ENCODE measurements at regions of chr11 and their contacts with region 1.

Region 1: DNA sequence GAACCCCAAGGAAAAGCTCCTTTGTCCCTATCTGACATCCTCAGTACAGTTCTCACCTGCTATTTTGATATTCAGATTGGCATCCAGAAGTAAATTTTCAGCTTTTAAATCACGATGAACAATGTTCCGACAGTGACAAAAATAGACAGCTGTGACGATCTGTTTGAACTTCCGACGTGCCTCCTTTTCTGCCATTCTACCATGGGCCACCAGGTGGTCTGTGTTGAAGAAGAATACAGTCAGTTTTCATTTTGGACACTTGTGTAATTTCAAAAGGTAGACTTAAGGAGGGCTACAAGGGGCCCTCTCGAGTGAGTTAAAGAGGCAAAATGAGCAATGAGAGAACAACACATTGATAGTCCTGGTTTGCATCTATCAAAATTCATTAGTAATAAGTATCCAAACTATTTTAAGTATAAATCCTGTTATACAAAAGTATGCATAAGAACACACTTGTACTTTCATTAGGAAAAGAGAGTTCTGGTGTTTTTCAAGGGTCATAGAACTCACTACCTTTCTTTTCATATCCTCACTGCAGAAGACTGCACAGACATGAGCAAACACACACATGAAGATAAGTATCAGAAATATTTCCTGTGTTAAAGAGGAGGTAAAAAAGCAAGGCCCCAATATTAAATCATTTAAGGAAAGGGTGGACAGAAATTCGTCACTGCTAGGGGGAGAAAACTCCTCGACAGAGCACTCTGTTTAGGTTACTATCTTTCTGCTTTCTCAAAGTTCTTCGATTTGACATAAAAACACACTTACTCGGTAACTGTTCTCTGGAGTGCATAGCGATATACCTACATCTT is 89.9 kb upstream of the APOA1 start:
- DNase-seq: peak in 7 of 9 donors; percentile 49 to 75 (median 65)
- ATAC-seq: peak; percentile 52
- H3K4me3 ChIP-seq: peak overlapping the region; percentile 18
- H3K4me3 Mint-ChIP-seq: peak overlapping the region; percentile 56 to 85 (median 72)
- H3K27ac ChIP-seq: peak overlapping the region; percentile 81
- H3K27ac Mint-ChIP-seq: peak overlapping the region; percentile 64 to 98 (median 94)
- H3K4me1 ChIP-seq: peaks cover 76 to 80% of the 10 kb centered on the region in 2 donors
- H3K4me1 Mint-ChIP-seq: peaks cover 53 to 90% (median 83%) of the 10 kb centered on the region in 7 donors
- H3K27me3 ChIP-seq: no peaks in the 10 kb centered on the region
- H3K27me3 Mint-ChIP-seq: no peaks in the 10 kb centered on the region

Region 2: GRCh38 chr11:116772443-116773202 is 154.7 kb before region 1 on chr11 and contains the start of gene BUD13:
- CTCF ChIA-PET with region 1: no interaction called
- POLR2A ChIA-PET with region 1: interaction called, 3 read pairs
- intact Hi-C with region 1: loop called in 1 of 2 experiments (anchors 2 kb)
- DNase-seq: peak; percentile 89 to 98 (median 93)
- ATAC-seq: peak; percentile 97
- H3K4me3 ChIP-seq: peak within 1 kb of the TSS; percentile 94
- H3K4me3 Mint-ChIP-seq: peak within 1 kb of the TSS; percentile 86 to 99 (median 96)
- H3K27ac ChIP-seq: peak within 1 kb of the TSS; percentile 93
- H3K27ac Mint-ChIP-seq: peak within 1 kb of the TSS; percentile 92 to 99 (median 97)
- H3K4me1 ChIP-seq: peaks cover 19 to 20% of the 10 kb centered on the region in 2 donors
- H3K4me1 Mint-ChIP-seq: peaks cover 25 to 53% (median 44%) of the 10 kb centered on the region in 7 donors
- H3K27me3 ChIP-seq: no peaks in the 10 kb centered on the region
- H3K27me3 Mint-ChIP-seq: no peaks in the 10 kb centered on the region
- total RNA-seq, gene BUD13: 10.3 to 32.0 (median 20.3) TPM

Region 3: DNA sequence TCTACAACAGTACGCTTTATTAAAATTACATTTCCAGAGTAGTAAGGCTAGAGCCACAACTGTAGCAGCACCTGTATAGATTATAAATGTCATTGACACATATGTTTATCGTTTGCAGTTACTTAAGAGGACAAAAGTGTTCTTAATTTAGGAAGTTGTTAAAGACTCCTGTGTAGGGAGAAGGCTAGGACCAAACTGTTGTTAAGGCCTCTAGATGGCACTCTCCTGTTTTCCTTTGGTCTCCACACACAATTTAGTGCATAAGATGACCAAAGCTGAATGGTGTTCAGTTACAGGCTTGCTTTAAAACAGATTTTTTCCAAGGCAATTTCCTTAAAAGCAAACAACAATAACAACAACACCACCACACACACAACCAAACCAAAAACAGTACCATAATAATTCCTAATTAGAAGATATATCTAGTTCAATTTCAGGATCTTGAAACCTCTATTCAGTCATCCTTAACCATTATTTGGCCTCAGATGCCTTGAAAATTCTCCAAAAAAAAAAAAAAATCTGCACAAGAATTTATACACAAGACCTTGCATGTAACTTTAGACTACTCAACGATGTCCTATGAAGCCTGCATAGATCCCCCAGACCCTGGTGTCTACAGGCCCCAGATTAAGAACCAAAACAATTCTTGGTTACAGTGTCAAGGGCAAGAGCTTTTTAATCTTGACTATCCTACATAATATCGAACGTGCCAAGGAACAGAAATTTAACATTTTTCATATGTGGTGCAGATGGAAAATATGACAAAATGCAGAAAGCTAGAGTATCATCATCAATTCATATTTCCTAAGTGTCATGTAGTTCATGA is 47.4 kb before region 1 on chr11:
- CTCF ChIA-PET with region 1: interaction called, 4 read pairs
- POLR2A ChIA-PET with region 1: no interaction called
- intact Hi-C with region 1: loop called in 1 of 2 experiments (anchors 10 kb)
- DNase-seq: peak in 7 of 9 donors; percentile 31 to 54 (median 39)
- ATAC-seq: peak; percentile 84
- H3K4me3 ChIP-seq: no peak overlapping the region
- H3K4me3 Mint-ChIP-seq: no peak overlapping the region
- H3K27ac ChIP-seq: no peak overlapping the region
- H3K27ac Mint-ChIP-seq: peak overlapping the region in 4 of 9 donors; percentile 23 to 67 (median 46)
- H3K4me1 ChIP-seq: no peaks in the 10 kb centered on the region
- H3K4me1 Mint-ChIP-seq: peaks cover 0 to 18% (median 9%) of the 10 kb centered on the region in 7 donors
- H3K27me3 ChIP-seq: no peaks in the 10 kb centered on the region
- H3K27me3 Mint-ChIP-seq: no peaks in the 10 kb centered on the region

Region 4: DNA sequence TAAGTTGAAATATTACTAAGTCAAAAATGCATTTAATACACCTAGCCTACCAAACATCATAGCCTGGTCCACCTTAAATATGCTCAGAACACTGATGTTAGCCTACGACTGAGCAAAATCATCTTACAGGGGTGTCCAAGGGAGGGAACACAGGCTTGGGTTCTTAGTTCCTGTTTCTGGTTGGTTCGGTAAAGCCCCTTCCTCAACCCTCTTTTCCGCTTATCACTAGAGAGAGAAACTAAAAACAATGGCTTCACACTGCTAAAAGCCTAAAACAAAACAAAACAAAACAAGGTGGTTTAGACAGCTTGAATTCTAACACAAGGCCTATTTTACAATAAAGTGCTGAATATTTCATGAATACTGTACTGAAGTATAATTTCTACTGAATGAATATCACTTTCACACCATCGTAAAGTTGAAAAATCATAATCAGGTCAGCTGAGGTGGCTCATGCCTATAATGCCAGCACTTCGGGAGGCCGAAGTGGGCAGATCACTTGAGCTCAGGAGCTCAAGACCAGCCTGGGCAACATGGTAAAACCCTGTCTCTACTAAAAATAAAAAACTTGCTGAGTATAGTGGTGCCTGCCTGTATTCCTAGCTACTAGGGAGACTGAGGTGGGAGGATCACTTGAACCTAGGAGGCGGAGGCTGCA is 52.9 kb after region 1 on chr11:
- CTCF ChIA-PET with region 1: no interaction called
- POLR2A ChIA-PET with region 1: no interaction called
- intact Hi-C with region 1: loop called (anchors 5 kb)
- DNase-seq: peak in 7 of 9 donors; percentile 17 to 46 (median 28)
- ATAC-seq: peak; percentile 89
- H3K4me3 ChIP-seq: no peak overlapping the region
- H3K4me3 Mint-ChIP-seq: peak overlapping the region; percentile 44 to 82 (median 68)
- H3K27ac ChIP-seq: peak overlapping the region; percentile 64
- H3K27ac Mint-ChIP-seq: peak overlapping the region; percentile 65 to 90 (median 86)
- H3K4me1 ChIP-seq: peaks cover 0 to 8% of the 10 kb centered on the region in 2 donors
- H3K4me1 Mint-ChIP-seq: peaks cover 25 to 64% (median 54%) of the 10 kb centered on the region in 7 donors
- H3K27me3 ChIP-seq: no peaks in the 10 kb centered on the region
- H3K27me3 Mint-ChIP-seq: no peaks in the 10 kb centered on the region

Region 5: GRCh38 chr11:117020869-117021564 is 93.6 kb after region 1 on chr11:
- CTCF ChIA-PET with region 1: no interaction called
- POLR2A ChIA-PET with region 1: no interaction called
- intact Hi-C with region 1: loop called in 1 of 2 experiments (anchors 5 kb)
- DNase-seq: no peak
- ATAC-seq: no peak
- H3K4me3 ChIP-seq: no peak overlapping the region
- H3K4me3 Mint-ChIP-seq: peak overlapping the region in 4 of 10 donors; percentile 23 to 52 (median 30)
- H3K27ac ChIP-seq: no peak overlapping the region
- H3K27ac Mint-ChIP-seq: peak overlapping the region in 6 of 9 donors; percentile 4 to 64 (median 34)
- H3K4me1 ChIP-seq: peaks cover 26 to 45% of the 10 kb centered on the region in 2 donors
- H3K4me1 Mint-ChIP-seq: peaks cover 53 to 76% (median 64%) of the 10 kb centered on the region in 7 donors
- H3K27me3 ChIP-seq: no peaks in the 10 kb centered on the region
- H3K27me3 Mint-ChIP-seq: no peaks in the 10 kb centered on the region

Region 6: GRCh38 chr11:117107701-117108590 is 180.6 kb after region 1 on chr11:
- CTCF ChIA-PET with region 1: interaction called, 9 read pairs
- POLR2A ChIA-PET with region 1: no interaction called
- intact Hi-C with region 1: loop called in 1 of 2 experiments (anchors 1 kb)
- DNase-seq: no peak
- ATAC-seq: no peak
- H3K4me3 ChIP-seq: no peak overlapping the region
- H3K4me3 Mint-ChIP-seq: no peak overlapping the region
- H3K27ac ChIP-seq: no peak overlapping the region
- H3K27ac Mint-ChIP-seq: no peak overlapping the region
- H3K4me1 ChIP-seq: no peaks in the 10 kb centered on the region
- H3K4me1 Mint-ChIP-seq: peaks cover 0 to 5% (median 0%) of the 10 kb centered on the region in 7 donors
- H3K27me3 ChIP-seq: no peaks in the 10 kb centered on the region
- H3K27me3 Mint-ChIP-seq: peaks cover 0 to 5% (median 0%) of the 10 kb centered on the region in 5 donors